ENCODE measurements at regions of chr19 and their contacts with region 1.

Region 1: DNA sequence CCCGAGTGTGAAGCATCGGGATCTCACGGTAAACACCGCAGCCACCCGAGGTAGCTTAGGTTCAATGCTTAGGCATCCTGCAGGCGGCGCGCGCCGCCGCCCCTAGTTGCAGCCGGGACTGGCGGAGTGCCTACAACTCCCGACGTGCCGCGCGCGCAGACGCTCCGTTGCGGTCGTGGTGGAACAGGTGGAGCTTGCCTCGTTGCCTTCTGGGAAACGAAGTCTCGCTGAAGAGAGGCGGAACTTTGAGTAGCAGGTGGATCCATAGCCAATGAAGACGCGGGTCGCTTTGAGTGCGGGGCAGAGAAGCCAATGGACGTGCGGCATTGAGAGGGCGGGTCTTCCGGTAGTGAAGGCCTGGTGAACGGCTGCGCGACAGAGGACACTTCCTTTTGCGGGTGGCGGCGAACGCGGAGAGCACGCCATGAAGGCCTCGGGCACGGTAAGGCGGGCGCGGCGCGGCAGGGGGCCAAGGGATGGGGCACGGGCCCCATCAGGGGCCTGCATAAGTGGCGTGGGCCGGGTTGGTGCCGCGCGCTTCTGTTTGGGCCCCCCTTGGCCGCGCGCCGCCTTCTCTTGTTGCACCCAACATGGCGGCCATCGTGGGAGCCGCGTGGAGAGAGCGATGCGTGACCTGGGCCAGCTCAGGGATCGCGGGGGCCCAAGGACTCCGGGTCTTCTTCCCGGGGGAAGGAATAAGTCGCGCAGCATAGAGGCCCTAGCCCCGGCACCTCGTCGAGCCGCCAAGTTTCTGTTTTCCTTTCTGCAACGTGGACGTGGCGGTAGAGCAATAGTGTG is at the start of gene RPL18A:
- DNase-seq: peak; percentile 98 to 99 (median 99)
- ATAC-seq: peak; percentile 95 to 99 (median 98)
- H3K4me3 ChIP-seq: peak within 1 kb of the TSS; percentile 83 to 97 (median 94)
- H3K27ac ChIP-seq: peak within 1 kb of the TSS; percentile 71 to 80 (median 78)
- H3K4me1 ChIP-seq: peaks cover 0 to 13% (median 6%) of the 10 kb centered on the region in 4 donors
- H3K27me3 ChIP-seq: no peaks in the 10 kb centered on the region
- CTCF ChIP-seq: peak; percentile 70 to 86 (median 79)
- POLR2A ChIP-seq: peak; percentile 96
- total RNA-seq, gene RPL18A: 449 to 778 (median 494) TPM

Region 2: DNA sequence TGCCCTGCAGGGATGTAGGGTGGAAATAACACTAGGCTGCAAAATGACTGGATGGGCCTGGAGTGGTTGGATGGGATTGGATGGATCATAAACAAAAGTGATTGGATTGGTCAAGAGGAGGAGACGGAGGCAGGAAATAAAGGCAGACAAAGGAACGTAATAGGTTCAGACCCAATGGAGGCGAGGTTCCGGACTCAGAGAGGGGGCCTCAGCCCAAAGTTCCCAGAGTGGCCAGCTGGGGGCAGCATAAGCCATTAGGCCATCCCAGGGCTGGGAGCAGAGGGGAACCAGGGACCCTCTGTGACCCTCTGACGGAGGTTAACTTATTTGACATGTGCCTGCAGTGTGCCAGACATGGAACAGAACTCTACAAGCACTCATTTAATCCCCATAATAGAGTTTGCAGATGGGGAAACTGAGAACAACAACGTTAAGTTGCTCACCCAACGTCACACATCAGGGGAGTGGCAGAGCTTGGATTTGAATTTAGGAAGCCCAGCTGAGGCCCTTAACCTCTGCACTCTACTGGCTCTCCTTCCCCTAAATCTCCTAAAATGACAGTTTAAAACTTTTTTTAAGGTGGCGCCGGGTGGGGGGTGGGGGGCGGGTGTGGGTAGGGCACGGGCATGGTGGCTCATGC is 155.8 kb before region 1 on chr19:
- intact Hi-C with region 1: loop called in 1 of 2 experiments (anchors 10 kb)
- DNase-seq: peak in 1 of 3 donors; percentile 58
- ATAC-seq: peak; percentile 79 to 87 (median 83)
- H3K4me3 ChIP-seq: no peak overlapping the region
- H3K27ac ChIP-seq: no peak overlapping the region
- H3K4me1 ChIP-seq: no peaks in the 10 kb centered on the region
- H3K27me3 ChIP-seq: no peaks in the 10 kb centered on the region
- CTCF ChIP-seq: peak; percentile 66 to 81 (median 72)
- POLR2A ChIP-seq: no peak

Region 3: GRCh38 chr19:17784201-17785008 is 75.3 kb before region 1 on chr19:
- intact Hi-C with region 1: loop called in 1 of 2 experiments (anchors 10 kb)
- DNase-seq: peak in 2 of 3 donors; percentile 57 to 58
- ATAC-seq: peak; percentile 49 to 82 (median 73)
- H3K4me3 ChIP-seq: no peak overlapping the region
- H3K27ac ChIP-seq: no peak overlapping the region
- H3K4me1 ChIP-seq: no peaks in the 10 kb centered on the region
- H3K27me3 ChIP-seq: no peaks in the 10 kb centered on the region
- CTCF ChIP-seq: peak; percentile 60 to 87 (median 69)
- POLR2A ChIP-seq: no peak

Region 4: DNA sequence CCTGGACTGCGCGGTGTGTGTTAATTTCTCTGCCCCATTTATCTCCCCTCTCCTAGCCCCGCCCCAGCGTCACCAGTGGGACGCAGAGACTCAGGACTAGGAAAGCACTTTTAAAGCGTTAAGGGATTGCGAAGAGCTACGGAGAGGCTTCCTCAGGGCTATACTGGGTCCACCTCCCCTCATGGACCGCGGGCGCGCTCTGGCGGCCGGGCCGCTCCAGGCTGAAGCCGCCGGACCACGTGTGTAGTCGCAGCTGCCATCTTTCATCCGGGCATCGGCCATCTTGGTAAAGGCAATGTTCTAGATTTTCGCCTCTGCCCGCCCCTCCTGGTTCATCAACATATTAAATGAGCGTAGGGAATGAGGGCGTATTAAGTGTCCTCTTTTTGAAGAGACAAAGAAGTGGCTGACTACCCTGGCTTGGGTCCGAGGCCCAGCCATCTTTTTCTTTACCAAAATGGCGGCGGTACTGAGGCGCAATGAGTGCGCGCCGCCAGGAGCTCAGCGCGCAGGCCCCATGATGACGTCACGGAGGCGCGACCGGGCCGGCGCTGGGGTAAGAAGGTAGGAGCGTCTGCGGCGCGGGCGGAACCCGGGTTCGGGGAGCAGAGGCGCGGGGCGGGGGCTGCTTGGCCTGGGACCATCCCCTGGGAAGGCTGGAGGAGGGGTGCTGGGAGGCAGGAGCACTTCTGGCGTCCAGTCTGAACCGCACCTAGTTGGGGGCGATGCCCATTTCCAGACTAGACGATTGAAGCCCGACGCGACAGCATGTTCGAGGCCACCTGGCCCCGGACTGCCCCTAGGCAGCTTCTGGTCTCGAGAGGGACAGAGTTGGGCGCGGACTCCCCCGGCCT is 73.0 kb after region 1 on chr19 and contains the start of gene CCDC124:
- intact Hi-C with region 1: loop called in 1 of 2 experiments (anchors 10 kb)
- DNase-seq: peak; percentile 92 to 94 (median 92)
- ATAC-seq: peak; percentile 97 to 99 (median 98)
- H3K4me3 ChIP-seq: peak within 1 kb of the TSS; percentile 67 to 89 (median 80)
- H3K27ac ChIP-seq: peak within 1 kb of the TSS; percentile 81 to 88 (median 84)
- H3K4me1 ChIP-seq: peaks cover 0 to 11% (median 3%) of the 10 kb centered on the region in 4 donors
- H3K27me3 ChIP-seq: no peaks in the 10 kb centered on the region
- CTCF ChIP-seq: peak; percentile 84 to 91 (median 88)
- POLR2A ChIP-seq: peak; percentile 76
- total RNA-seq, gene CCDC124: 20.6 to 45.3 (median 30.7) TPM